ENCODE measurements at regions of chr2 and their contacts with region 1.

Region 1: GRCh38 chr2:46650556-46651001 is 171.2 kb downstream of the TMEM247 start:
- DNase-seq: peak; percentile 14 to 80 (median 69)
- ATAC-seq: peak; percentile 90
- H3K4me3 ChIP-seq: no peak overlapping the region
- H3K4me3 Mint-ChIP-seq: no peak overlapping the region
- H3K27ac ChIP-seq: no peak overlapping the region
- H3K27ac Mint-ChIP-seq: peak overlapping the region in 1 of 9 donors; percentile 36
- H3K4me1 ChIP-seq: no peaks in the 10 kb centered on the region
- H3K4me1 Mint-ChIP-seq: no peaks in the 10 kb centered on the region
- H3K27me3 ChIP-seq: no peaks in the 10 kb centered on the region
- H3K27me3 Mint-ChIP-seq: peaks cover 0 to 15% (median 0%) of the 10 kb centered on the region in 5 donors

Region 2: DNA sequence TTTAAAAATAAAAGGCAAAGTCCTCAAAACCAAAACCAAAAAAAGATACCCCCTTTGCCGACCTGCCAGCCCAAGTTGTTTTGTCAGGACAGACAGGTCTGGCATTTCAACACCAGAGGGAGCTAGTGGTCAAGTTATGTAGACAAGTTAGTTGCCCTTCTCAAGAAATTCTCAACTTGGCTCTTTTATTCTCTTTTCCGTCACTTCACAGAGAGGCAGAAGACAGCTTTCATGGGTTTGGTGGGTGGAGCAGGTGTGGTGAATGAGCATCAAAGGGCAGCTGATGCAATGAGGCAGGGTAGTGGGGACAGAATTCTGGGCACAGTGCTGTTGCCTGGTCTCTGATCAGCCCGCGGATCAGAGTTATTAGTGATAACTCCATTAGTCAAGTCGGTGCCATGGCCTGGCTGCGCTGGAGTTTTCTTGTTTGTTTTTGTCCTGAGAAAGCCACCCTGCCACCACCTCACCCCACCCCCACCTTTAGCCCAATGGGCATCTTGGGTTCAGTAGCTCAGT is 657.0 kb before region 1 on chr2:
- CTCF ChIA-PET with region 1: no interaction called
- POLR2A ChIA-PET with region 1: interaction called, 5 read pairs
- intact Hi-C with region 1: loop called (anchors 2 kb)
- DNase-seq: peak in 8 of 9 donors; percentile 46 to 75 (median 64)
- ATAC-seq: peak; percentile 75
- H3K4me3 ChIP-seq: no peak overlapping the region
- H3K4me3 Mint-ChIP-seq: no peak overlapping the region
- H3K27ac ChIP-seq: no peak overlapping the region
- H3K27ac Mint-ChIP-seq: peak overlapping the region in 1 of 9 donors; percentile 36
- H3K4me1 ChIP-seq: no peaks in the 10 kb centered on the region
- H3K4me1 Mint-ChIP-seq: peaks cover 0 to 10% (median 6%) of the 10 kb centered on the region in 7 donors
- H3K27me3 ChIP-seq: no peaks in the 10 kb centered on the region
- H3K27me3 Mint-ChIP-seq: peaks cover 0 to 3% (median 0%) of the 10 kb centered on the region in 5 donors

Region 3: GRCh38 chr2:46062637-46063412 is 587.8 kb before region 1 on chr2:
- CTCF ChIA-PET with region 1: interaction called, 4 read pairs
- POLR2A ChIA-PET with region 1: no interaction called
- intact Hi-C with region 1: loop called in 1 of 2 experiments (anchors 5 kb)
- DNase-seq: peak; percentile 14 to 63 (median 50)
- ATAC-seq: peak; percentile 73
- H3K4me3 ChIP-seq: no peak overlapping the region
- H3K4me3 Mint-ChIP-seq: no peak overlapping the region
- H3K27ac ChIP-seq: no peak overlapping the region
- H3K27ac Mint-ChIP-seq: no peak overlapping the region
- H3K4me1 ChIP-seq: peaks cover 0 to 4% of the 10 kb centered on the region in 2 donors
- H3K4me1 Mint-ChIP-seq: peaks cover 0 to 18% (median 0%) of the 10 kb centered on the region in 7 donors
- H3K27me3 ChIP-seq: no peaks in the 10 kb centered on the region
- H3K27me3 Mint-ChIP-seq: peaks cover 0 to 2% (median 0%) of the 10 kb centered on the region in 5 donors

Region 4: DNA sequence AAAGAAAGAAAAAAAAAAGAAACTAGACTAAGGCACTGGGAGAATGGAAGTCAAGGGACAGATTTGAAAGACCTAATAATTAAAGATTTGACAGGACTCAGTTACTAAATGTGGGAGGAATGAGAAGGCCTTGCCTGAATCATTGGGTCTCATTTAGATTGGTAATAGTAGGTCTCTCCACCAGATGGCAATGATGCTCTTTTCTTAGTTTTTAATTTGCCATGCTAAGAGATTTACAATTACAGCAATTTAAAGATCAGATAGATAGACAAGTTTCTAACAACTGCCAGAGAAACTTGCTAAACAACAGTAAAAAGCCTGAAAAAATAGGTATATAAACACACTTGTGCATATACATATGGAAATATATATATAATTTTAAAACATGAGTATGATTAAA is 18.2 kb before region 1 on chr2:
- CTCF ChIA-PET with region 1: interaction called, 4 read pairs
- POLR2A ChIA-PET with region 1: no interaction called
- intact Hi-C with region 1: loop called (anchors 1 to 2 kb)
- DNase-seq: peak in 2 of 9 donors; percentile 17 to 23
- ATAC-seq: no peak
- H3K4me3 ChIP-seq: no peak overlapping the region
- H3K4me3 Mint-ChIP-seq: no peak overlapping the region
- H3K27ac ChIP-seq: no peak overlapping the region
- H3K27ac Mint-ChIP-seq: no peak overlapping the region
- H3K4me1 ChIP-seq: peaks cover 0 to 7% of the 10 kb centered on the region in 2 donors
- H3K4me1 Mint-ChIP-seq: peaks cover 8 to 29% (median 10%) of the 10 kb centered on the region in 7 donors
- H3K27me3 ChIP-seq: no peaks in the 10 kb centered on the region
- H3K27me3 Mint-ChIP-seq: no peaks in the 10 kb centered on the region

Region 5: DNA sequence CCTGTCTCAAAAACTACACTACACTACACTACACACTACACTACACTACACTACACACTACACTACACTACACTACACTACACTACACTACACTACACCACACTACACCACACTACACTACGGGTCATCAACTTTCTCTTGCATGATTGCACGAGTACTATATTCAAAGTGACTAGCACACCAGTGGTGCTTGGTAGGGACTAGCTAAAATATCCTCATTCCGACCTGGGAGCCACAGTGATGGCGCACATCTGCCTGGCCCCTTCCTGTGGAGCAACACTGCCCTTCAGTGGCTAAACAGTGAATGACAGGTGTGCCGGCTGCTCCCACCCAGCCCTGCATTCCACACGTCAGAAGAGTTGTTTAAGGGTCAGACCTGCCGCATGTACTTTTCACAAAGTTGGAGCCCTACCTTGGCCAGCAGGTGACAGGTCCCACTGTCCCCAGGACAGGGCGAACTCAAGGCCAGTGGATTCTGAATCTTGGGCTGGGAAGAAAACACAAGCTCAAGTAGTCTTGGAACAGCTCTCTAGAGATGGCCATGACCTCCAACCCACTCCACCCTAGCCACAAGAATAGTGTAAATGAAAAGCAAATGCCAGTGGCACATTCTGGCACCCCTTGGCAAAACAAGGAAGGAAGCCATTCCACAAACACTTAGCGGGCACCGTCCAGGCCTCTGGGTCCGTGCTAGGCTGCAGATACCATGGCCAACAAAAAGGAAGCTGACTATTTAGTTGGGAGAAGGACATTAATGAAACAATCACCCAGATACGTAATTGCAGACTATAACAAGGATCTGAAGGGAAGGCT is 672.6 kb after region 1 on chr2:
- CTCF ChIA-PET with region 1: no interaction called
- POLR2A ChIA-PET with region 1: no interaction called
- intact Hi-C with region 1: loop called in 1 of 2 experiments (anchors 1 kb)
- DNase-seq: peak; percentile 12 to 70 (median 51)
- ATAC-seq: peak; percentile 97
- H3K4me3 ChIP-seq: no peak overlapping the region
- H3K4me3 Mint-ChIP-seq: no peak overlapping the region
- H3K27ac ChIP-seq: no peak overlapping the region
- H3K27ac Mint-ChIP-seq: no peak overlapping the region
- H3K4me1 ChIP-seq: no peaks in the 10 kb centered on the region
- H3K4me1 Mint-ChIP-seq: no peaks in the 10 kb centered on the region
- H3K27me3 ChIP-seq: no peaks in the 10 kb centered on the region
- H3K27me3 Mint-ChIP-seq: peaks cover 0 to 11% (median 0%) of the 10 kb centered on the region in 5 donors